Heart left ventricle (tissue), 16 donors: ENCODE measurements at regions of chr1 and their contacts with region 1.

Region 1: DNA sequence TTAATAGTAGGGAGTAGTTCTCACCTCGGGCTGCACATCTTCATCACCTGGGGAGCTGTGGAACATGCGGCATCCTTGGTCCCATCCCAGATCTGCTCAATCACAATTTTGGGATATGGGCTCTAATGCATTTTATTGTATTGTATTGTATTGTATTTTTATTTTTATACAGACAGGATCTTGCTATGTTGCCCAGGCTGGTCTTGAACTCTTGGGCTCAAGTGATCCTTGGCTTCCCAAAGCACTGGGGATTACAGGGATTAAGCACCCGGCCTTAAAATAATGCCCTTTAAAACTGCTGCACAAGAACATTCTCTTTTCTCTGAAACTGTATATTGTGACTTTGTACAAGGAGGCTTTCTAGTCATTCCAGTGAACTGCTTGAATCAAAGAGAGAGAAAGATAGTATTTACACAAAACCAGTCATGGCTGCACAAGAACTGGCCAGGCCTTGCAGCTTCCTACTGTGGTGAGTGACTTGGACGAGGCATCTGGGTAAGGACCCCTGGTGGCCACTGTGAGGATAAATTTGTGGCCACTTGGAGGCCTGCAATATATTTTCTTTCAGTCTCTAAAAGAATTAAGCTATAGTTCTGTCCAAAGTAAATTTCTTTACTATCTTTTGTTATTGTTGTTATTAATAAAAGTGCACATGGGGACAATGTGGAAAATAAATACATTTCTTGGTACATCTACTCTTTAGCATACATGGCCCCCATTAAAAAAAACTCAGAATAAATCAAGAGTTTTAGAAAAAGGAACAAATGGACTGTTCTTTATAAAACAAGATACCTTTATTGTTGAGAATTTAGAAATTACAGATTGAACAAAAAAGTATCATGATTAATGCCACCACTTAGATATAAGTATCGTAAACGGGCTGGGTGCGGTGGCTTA is 48.0 kb downstream of the TBCE start:
- DNase-seq: peak in 4 of 5 donors; percentile 40 to 63 (median 56)
- ATAC-seq: peak; percentile 78 to 80 (median 80)
- H3K4me3 ChIP-seq: no peak overlapping the region
- H3K27ac ChIP-seq: no peak overlapping the region
- H3K4me1 ChIP-seq: peaks cover 0 to 9% (median 0%) of the 10 kb centered on the region in 12 donors
- H3K27me3 ChIP-seq: no peaks in the 10 kb centered on the region
- CTCF ChIP-seq: peak; percentile 60 to 85 (median 72)
- POLR2A ChIP-seq: no peak

Region 2: DNA sequence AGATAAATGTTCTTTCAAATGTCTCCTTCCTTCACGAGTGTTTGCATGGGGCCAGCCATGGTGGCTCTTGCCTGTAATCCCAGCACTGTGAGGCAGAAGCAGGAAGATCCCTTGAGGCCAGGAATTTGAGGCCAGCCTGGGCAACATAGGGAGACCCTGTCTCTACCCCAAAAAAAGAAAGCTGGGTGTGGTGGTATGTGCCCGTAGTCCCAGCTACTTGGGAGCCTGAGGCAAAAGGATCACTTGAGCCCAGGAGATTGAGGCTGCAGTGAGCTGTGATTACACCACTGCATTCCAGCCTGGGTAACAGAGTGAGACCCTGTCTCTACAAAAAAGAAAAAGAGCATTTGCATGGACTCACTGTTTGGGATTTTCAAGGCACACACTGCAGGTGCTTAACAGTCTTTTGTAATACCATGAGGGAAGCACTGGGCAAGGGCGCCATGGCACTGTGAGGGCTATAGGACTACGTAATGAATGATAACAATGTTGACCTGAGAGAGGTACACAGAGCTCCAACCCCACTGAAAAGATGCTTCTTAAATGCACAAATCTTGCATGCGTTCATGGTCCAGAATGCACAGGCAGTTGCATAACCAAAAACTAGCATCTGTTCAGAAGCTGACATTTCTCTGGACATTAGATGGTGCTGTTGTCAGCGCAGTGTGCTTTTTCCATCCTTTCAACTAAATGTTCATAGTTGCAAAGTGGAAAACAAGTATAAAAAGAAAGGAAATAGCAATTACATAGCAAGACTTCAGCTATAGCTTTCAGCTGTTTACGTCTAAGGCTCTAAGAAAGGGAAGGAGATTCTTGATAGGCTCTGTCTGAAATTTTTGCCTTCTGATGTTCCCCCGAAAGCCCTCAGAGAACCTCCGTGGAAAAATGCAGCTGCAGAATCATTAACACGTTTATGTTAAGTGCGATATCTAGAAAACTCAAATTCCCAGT is 928.5 kb before region 1 on chr1:
- intact Hi-C with region 1: loop called in 3 of 10 experiments (anchors 10 kb)
- DNase-seq: peak in 2 of 5 donors; percentile 32 to 45
- ATAC-seq: peak; percentile 51 to 84 (median 82)
- H3K4me3 ChIP-seq: peak overlapping the region in 3 of 12 donors; percentile 4 to 13 (median 8)
- H3K27ac ChIP-seq: peak overlapping the region in 5 of 12 donors; percentile 10 to 43 (median 32)
- H3K4me1 ChIP-seq: peaks cover 0 to 30% (median 5%) of the 10 kb centered on the region in 12 donors
- H3K27me3 ChIP-seq: peaks cover 0 to 7% (median 0%) of the 10 kb centered on the region in 9 donors
- CTCF ChIP-seq: peak; percentile 51 to 84 (median 70)
- POLR2A ChIP-seq: no peak

Region 3: GRCh38 chr1:235105051-235106043 is 309.9 kb before region 1 on chr1:
- intact Hi-C with region 1: loop called in 7 of 10 experiments (anchors 5 to 10 kb)
- DNase-seq: no peak
- ATAC-seq: no peak
- H3K4me3 ChIP-seq: peak overlapping the region in 1 of 12 donors; percentile 1
- H3K27ac ChIP-seq: no peak overlapping the region
- H3K4me1 ChIP-seq: peaks cover 0 to 9% (median 1%) of the 10 kb centered on the region in 12 donors
- H3K27me3 ChIP-seq: no peaks in the 10 kb centered on the region
- CTCF ChIP-seq: no peak
- POLR2A ChIP-seq: no peak

Region 4: DNA sequence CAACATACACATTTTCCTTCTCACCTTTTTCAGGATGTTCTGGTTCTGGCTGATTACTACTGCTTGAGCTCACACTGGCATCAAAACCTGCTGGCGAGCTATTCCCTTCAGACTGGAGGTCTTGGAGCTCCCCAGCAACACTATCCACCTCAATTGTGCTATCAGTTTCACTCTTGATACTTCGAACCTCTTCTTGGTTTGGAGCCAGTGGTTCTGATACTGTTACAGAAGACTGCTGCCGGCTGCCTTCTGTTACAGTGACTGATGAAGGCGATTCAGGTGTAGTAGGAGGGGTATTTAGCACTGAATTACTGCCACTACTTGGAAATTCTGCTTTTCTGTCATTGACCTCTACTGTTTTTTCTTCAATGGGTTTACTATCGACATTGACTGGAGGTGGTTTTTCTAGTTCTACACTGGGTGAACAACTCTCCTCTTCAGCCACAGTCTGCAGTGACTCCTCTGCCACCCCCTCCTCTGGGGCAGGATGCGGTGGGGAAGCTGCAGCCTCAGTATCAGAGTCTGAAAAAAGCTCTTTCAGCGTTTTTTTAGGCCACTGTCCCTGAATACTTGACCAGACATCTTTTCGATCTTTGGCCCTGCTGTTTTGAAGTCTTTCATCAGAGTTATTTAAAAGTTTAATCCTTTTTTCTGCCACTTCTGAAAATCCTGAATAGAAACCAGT is 233.6 kb before region 1 on chr1:
- intact Hi-C with region 1: no loop called
- DNase-seq: no peak
- ATAC-seq: no peak
- H3K4me3 ChIP-seq: no peak overlapping the region
- H3K27ac ChIP-seq: no peak overlapping the region
- H3K4me1 ChIP-seq: no peaks in the 10 kb centered on the region
- H3K27me3 ChIP-seq: no peaks in the 10 kb centered on the region
- CTCF ChIP-seq: no peak
- POLR2A ChIP-seq: no peak

Region 5: DNA sequence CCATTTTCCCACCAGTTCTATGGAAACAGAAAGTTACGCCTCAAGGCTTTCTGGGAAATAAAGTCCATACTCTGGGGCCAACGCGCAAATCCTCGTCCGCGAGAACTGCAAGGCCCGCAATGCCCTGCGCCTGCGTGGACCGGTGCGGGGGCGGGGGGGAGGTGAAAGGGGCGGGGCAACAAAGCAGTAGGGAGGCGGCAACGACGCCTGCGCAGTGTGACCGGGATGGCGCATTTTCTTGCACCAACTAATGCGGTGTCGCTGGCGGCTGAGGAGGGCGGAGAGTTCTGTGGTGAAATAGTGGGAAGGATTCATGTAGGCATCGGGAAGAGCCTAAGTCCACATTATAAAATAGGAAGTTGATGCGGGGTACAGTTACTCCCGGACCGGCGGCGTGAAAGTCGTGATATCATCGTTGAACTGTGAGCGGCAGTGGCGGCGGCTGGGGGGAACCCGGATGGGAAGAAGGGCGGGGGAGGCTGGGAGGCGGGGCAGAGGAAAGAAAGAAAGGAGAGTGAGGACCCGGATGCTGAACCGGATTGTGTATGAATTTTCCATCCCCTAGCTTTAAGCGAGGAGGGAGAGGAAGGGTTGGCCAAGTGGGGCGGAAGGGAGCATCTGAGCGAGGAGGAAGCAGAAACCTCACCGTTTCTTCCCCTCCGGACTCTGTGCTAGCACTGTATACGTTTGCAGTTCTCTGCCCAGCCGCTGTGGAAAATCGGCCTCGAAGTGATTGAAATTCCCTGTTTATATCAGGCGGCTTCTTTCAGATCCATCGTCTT is 86.7 kb before region 1 on chr1 and contains the start of gene GGPS1:
- intact Hi-C with region 1: loop called in 5 of 10 experiments (anchors 5 to 10 kb)
- DNase-seq: peak; percentile 98 to 99 (median 98)
- ATAC-seq: peak; percentile 92 to 96 (median 96)
- H3K4me3 ChIP-seq: peak within 1 kb of the TSS; percentile 75 to 96 (median 92)
- H3K27ac ChIP-seq: peak within 1 kb of the TSS; percentile 91 to 98 (median 96)
- H3K4me1 ChIP-seq: peaks cover 16 to 70% (median 61%) of the 10 kb centered on the region in 12 donors
- H3K27me3 ChIP-seq: no peaks in the 10 kb centered on the region
- CTCF ChIP-seq: peak in 1 of 12 donors; percentile 4
- POLR2A ChIP-seq: peak in 1 of 2 donors; percentile 78
- total RNA-seq, gene GGPS1: 16.4 to 40.2 (median 30.0) TPM

Region 6: GRCh38 chr1:235367000-235367908 is 48.0 kb before region 1 on chr1 and contains the start of gene TBCE:
- intact Hi-C with region 1: loop called in 1 of 10 experiments (anchors 2 kb)
- DNase-seq: peak; percentile 96 to 98 (median 97)
- ATAC-seq: peak; percentile 100
- H3K4me3 ChIP-seq: peak within 1 kb of the TSS; percentile 45 to 93 (median 75)
- H3K27ac ChIP-seq: peak within 1 kb of the TSS; percentile 53 to 91 (median 80)
- H3K4me1 ChIP-seq: peaks cover 0 to 18% (median 6%) of the 10 kb centered on the region in 12 donors
- H3K27me3 ChIP-seq: no peaks in the 10 kb centered on the region
- CTCF ChIP-seq: peak in 3 of 12 donors; percentile 6 to 27 (median 10)
- POLR2A ChIP-seq: peak in 1 of 2 donors; percentile 89
- total RNA-seq, gene TBCE: 15.2 to 23.2 (median 18.0) TPM